ENCODE measurements at regions of chr14 and their contacts with region 1.

Region 1: DNA sequence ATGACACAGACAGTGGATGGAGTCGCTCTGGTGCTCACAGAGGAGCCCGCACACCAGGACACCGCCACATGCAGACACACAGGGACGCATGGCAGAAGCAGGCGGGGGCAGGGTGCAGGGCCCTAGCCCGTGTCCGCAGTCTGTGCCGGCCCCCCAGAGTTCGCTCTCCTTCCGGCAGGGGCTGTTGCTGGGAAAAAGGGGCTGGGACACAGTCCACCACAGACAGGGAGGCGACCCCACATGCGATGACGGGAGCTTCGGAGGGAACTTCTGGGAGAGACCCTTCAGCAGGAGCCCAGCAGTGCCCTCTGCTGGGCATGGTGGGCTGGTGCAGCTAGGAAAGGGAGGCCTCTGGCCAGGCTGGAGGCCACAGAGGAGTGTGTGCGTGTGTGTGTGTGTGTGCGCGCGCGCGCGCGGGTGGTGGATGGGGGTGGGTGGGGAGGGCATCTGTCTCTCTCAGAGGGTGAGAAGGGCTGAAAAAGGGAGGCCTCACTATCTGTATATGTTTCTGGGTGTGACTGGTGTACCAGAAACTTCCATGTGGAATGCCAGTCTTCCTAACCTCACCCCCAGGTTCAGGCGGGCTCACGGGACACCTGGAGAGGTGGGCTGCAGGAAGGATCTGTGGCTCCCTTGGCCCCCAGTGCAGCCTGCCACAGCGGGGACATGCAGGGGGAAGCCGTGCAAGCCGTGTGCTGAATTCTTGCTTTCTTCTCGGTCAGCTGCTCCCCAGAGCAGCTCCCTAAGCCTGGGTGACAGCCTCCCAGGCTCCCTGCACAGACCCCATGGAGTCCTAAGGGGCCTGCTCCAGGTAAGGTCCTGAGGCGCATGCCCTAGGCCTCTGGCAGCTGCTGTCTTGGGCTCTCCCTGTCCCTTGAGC is 60.7 kb downstream of the PLEKHG3 start:
- DNase-seq: peak; percentile 53 to 92 (median 77)

Region 2: DNA sequence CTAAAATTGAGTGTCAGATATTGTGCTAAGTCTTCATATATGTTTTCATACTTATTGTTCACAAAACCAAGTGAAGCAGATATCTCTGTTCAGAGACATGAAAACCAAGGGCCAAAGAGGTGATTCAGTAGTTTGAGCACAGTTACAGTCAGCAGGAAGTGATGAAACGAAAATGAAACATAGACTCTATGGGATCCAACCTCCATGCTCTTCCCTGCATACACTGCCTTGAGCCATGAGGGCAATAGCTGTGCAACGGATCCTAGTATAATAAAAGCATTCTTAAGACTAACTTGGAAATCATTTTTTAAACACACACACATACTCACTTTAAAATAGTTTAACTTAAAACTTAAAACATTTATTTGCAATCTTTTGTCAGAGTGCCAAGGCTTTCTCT is 498.6 kb before region 1 on chr14:
- intact Hi-C with region 1: no loop called
- DNase-seq: no peak

Region 3: DNA sequence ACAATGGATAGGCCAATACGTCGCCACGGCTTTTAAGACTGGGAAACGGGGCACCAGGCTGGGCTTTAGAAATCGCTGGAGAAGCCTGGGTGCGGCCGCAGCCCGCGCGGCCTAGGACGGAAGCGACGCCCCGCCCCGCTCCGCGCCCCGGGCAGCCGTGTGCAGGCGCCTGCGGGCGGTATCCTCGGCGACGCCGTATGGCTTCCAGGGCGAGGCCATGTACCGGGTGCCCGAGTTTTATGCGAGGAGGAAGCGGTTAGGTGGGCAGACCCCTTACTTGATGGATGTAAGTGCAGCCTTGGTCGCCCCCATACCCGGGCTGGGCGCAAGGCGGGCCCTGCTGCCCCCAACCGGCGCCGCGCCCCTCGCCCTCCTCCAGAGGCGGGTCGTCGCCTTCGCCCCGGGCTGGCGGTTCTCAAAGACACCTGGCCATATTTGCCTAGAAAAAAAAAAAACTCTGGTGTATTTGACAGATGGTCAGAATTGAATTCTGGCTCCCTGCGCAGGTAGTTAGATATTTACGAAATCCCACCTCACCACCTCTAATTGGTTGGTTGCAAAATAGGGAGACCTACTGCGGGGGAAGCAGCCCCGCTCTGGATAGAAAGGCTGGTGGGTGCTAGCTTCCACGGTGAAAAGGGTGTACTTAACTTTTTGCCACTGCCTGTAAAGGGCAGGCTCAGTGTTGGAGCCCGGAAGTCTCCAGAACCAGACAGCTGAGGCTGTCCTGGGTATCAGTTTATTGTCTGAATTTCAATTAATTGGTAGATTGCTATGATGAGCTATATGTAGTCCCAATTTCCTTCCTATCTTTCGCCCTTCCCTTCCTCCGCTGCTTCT is 214.9 kb before region 1 on chr14 and contains the start of gene PPP1R36:
- intact Hi-C with region 1: loop called (anchors 5 kb)
- DNase-seq: peak in 22 of 42 donors; percentile 11 to 58 (median 35)

Region 4: GRCh38 chr14:64671591-64671990 is 93.3 kb before region 1 on chr14:
- intact Hi-C with region 1: loop called (anchors 2 kb)
- DNase-seq: peak in 10 of 42 donors; percentile 37 to 79 (median 50)

Region 5: GRCh38 chr14:64698903-64699302 is 66.0 kb before region 1 on chr14:
- intact Hi-C with region 1: no loop called
- DNase-seq: peak in 3 of 42 donors; percentile 11 to 13 (median 12)

Region 6: DNA sequence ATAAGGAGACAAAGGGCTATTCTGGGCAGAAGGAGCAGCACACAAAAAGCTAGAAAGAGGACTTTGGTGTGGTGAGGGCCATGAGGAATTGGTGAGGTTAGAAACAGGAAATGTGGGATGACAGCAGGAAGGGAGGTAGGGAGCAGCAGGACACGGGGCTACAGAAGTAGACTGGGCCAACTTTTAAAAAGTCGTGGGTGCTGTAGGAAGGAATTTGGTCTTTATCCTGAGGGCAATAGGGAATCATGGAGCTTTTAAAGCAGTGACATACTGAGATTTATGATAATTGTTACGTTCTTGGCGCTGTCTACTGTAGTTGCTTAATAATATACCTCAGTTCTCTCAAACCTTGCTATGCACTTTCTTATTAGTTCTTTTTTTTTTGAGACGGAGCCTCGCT is 141.1 kb after region 1 on chr14:
- intact Hi-C with region 1: no loop called
- DNase-seq: no peak

Region 7: GRCh38 chr14:65156568-65157366 is 391.9 kb after region 1 on chr14:
- intact Hi-C with region 1: no loop called
- DNase-seq: no peak